Activated naive CD4-positive, alpha-beta T cell treated with anti-CD3 and anti-CD28 coated beads for 36 hours (primary cell): ENCODE measurements at regions of chr11 and their contacts with region 1.

Region 1: DNA sequence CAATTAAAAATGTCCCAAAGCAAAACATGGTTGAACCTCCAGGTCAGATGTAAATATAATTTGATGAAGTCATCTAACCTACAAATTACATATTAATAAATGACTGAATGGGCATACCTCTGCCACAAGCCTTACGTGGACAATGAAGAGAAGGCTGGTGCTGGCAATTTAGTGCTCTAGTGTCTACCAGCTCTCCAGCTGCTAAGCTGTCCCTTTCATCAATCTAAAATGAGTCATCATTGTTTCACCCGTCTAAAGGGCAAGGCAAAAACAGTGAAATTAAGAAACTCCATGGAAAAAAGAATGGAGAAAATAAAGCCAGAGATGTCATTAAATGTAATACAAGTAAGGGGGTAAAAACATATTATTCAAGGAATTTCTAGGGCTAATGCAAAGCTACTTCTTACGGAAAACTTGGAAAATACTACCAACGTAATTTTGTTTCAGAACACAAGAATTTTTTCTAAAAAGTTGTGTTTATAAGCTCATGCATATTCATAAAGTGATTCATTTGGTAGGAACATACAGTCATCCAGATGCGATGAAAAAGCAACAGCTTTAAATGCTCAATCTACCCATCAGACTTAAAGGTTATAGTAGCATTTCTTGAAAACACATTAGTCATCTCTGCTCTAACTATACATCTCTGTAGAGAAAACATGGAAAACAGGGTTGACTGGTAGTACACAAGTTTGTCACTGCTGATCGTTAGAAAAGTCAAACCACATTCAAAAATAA is 71.5 kb downstream of the SIK3 start:
- DNase-seq: peak; percentile 16
- H3K4me3 Mint-ChIP-seq: peak overlapping the region; percentile 14
- H3K27ac Mint-ChIP-seq: peak overlapping the region; percentile 84
- H3K4me1 Mint-ChIP-seq: peaks cover 68% of the 10 kb centered on the region
- H3K27me3 Mint-ChIP-seq: no peaks in the 10 kb centered on the region

Region 2: GRCh38 chr11:116927163-116927974 is 99.4 kb before region 1 on chr11:
- CTCF ChIA-PET with region 1: interaction called, 3 read pairs
- intact Hi-C with region 1: loop called (anchors 1 kb)
- DNase-seq: peak; percentile 73
- H3K4me3 Mint-ChIP-seq: peak overlapping the region; percentile 34
- H3K27ac Mint-ChIP-seq: peak overlapping the region; percentile 75
- H3K4me1 Mint-ChIP-seq: peaks cover 61% of the 10 kb centered on the region
- H3K27me3 Mint-ChIP-seq: no peaks in the 10 kb centered on the region

Region 3: GRCh38 chr11:116993599-116993998 is 33.2 kb before region 1 on chr11:
- CTCF ChIA-PET with region 1: no interaction called
- intact Hi-C with region 1: no loop called
- DNase-seq: peak; percentile 43
- H3K4me3 Mint-ChIP-seq: peak overlapping the region; percentile 48
- H3K27ac Mint-ChIP-seq: peak overlapping the region; percentile 19
- H3K4me1 Mint-ChIP-seq: peaks cover 54% of the 10 kb centered on the region
- H3K27me3 Mint-ChIP-seq: no peaks in the 10 kb centered on the region

Region 4: GRCh38 chr11:117010808-117011540 is 15.8 kb before region 1 on chr11:
- CTCF ChIA-PET with region 1: no interaction called
- intact Hi-C with region 1: loop called (anchors 1 kb)
- DNase-seq: no peak
- H3K4me3 Mint-ChIP-seq: no peak overlapping the region
- H3K27ac Mint-ChIP-seq: peak overlapping the region; percentile 53
- H3K4me1 Mint-ChIP-seq: peaks cover 35% of the 10 kb centered on the region
- H3K27me3 Mint-ChIP-seq: no peaks in the 10 kb centered on the region

Region 5: DNA sequence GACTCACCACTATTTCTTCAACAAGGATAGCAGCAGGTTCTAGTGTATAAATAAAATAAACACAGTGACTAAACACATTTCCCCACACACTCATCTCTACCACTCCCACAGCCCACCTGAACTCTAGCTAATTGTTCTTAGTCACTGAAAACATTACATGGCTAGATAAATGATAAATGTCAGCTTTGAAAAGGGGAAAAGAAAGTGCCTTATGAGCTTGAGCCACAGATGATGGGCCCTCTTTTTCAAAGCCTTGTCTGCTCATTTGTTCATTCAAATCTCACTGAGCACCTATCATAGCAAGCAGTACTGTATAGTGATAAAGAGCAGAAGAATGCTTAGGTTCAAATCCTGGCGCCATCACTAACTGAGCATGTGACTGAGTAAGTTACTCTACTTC is 13.1 kb after region 1 on chr11:
- CTCF ChIA-PET with region 1: no interaction called
- intact Hi-C with region 1: loop called (anchors 2 kb)
- DNase-seq: peak; percentile 40
- H3K4me3 Mint-ChIP-seq: no peak overlapping the region
- H3K27ac Mint-ChIP-seq: no peak overlapping the region
- H3K4me1 Mint-ChIP-seq: peaks cover 68% of the 10 kb centered on the region
- H3K27me3 Mint-ChIP-seq: no peaks in the 10 kb centered on the region

Region 6: GRCh38 chr11:117058761-117059261 is 32.0 kb after region 1 on chr11:
- CTCF ChIA-PET with region 1: interaction called, 5 read pairs
- intact Hi-C with region 1: loop called (anchors 1 kb)
- DNase-seq: no peak
- H3K4me3 Mint-ChIP-seq: no peak overlapping the region
- H3K27ac Mint-ChIP-seq: no peak overlapping the region
- H3K4me1 Mint-ChIP-seq: peaks cover 51% of the 10 kb centered on the region
- H3K27me3 Mint-ChIP-seq: no peaks in the 10 kb centered on the region

Region 7: GRCh38 chr11:117072517-117073461 is 46.0 kb after region 1 on chr11:
- CTCF ChIA-PET with region 1: interaction called, 5 read pairs
- intact Hi-C with region 1: loop called (anchors 1 kb)
- DNase-seq: no peak
- H3K4me3 Mint-ChIP-seq: no peak overlapping the region
- H3K27ac Mint-ChIP-seq: peak overlapping the region; percentile 30
- H3K4me1 Mint-ChIP-seq: peaks cover 63% of the 10 kb centered on the region
- H3K27me3 Mint-ChIP-seq: no peaks in the 10 kb centered on the region

Region 8: GRCh38 chr11:117092951-117093590 is 66.3 kb after region 1 on chr11:
- CTCF ChIA-PET with region 1: no interaction called
- intact Hi-C with region 1: loop called (anchors 1 kb)
- DNase-seq: no peak
- H3K4me3 Mint-ChIP-seq: no peak overlapping the region
- H3K27ac Mint-ChIP-seq: peak overlapping the region; percentile 60
- H3K4me1 Mint-ChIP-seq: peaks cover 76% of the 10 kb centered on the region
- H3K27me3 Mint-ChIP-seq: no peaks in the 10 kb centered on the region